Activated T-helper 2 cell treated with anti-CD3 and anti-CD28 coated beads, Interferon-gamma antibody, Interleukin-2, Interleukin-4, amounts not matched to agents 10 μg/mL and 5 μg/mL and 100 μg/mL, durations not matched to agents 14 hours and 24 hours and 36 hours (primary cell): ENCODE measurements at regions of chr17 and their contacts with region 1.

Region 1: DNA sequence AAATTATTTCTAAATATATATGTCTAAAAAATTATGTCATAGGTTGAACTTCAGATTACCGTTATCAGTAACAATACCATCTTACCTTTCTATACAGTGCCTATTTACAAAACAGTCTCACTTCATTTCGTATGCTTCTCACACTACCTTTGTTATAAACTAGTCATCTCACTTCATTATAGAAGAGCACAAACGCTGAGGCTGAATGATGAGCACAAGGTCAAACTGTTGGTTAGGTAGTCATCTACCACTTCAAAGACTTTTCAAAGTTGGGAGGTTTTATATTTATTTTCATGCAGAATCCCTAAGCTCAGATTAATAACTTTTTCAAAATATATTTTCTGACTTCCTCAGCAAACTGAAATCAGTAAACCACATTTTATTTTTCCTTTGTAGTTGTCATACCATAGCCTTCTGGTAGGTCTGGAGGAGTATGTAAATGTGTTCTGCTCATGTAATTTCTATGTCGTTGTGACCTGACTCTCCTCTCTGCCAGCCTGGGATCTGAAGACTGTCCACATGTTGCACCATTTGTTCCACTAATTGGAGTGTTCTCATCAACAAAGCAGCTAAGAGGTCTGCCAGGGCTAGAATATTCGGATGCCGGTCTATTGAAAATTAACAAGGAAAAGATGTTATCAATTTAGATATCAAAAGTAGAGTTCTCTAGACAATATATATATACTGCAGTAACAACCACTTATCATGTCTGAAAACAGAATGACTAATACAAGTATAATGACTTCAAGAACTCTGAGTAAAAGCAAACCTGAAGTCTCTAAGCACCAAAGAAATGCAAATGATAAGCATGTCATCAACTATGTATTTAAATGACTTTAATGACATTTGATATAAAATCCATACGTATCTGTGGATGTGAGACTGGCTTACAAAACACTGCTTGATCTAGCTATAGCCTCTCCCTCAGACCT is 73.9 kb downstream of the CEP95 start:
- DNase-seq: no peak
- H3K4me3 Mint-ChIP-seq: peak overlapping the region; percentile 42
- H3K27ac Mint-ChIP-seq: peak overlapping the region; percentile 97
- H3K4me1 Mint-ChIP-seq: peaks cover 19% of the 10 kb centered on the region
- H3K27me3 Mint-ChIP-seq: no peaks in the 10 kb centered on the region

Region 2: GRCh38 chr17:64635647-64636307 is 55.1 kb after region 1 on chr17:
- intact Hi-C with region 1: loop called (anchors 1 kb)
- DNase-seq: no peak
- H3K4me3 Mint-ChIP-seq: no peak overlapping the region
- H3K27ac Mint-ChIP-seq: peak overlapping the region; percentile 96
- H3K4me1 Mint-ChIP-seq: peaks cover 40% of the 10 kb centered on the region
- H3K27me3 Mint-ChIP-seq: no peaks in the 10 kb centered on the region